ENCODE measurements at regions of chr14 and their contacts with region 1.

Region 1: DNA sequence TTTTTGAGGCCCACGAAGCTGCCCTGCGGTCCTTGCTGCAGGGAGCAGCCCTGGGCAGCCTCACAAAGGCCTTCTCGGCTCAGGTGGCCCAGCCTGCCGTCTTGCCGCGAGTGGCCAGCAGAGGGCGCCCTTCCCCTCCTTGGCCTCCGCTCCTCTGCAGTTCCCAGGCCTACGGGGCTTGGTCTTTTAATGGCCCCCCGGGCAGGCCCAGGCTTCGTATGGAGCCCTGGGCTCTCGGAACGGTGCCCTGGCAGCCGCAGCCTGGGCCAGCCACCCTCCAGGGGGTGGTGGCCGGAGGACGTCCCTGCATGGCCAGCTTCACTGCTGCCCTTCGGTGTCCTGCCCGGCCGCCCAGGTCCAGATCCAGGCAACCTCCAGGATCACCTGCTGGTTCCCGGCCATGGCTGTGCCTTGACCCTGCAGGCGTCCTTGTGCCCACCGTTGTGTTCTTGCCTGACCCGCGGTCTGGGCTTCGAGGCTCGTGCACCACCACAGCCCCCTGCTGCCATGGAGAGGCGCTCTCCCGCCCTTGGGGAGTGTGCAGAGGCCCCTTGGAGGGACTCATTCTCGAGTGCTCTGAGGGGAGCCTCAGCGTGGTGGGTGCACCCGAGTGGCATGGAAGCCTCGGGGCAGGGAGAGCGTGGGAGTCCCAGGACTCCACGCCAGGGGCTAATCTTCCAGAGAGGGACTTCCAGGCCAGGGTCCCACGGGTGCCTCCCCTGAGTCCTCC is 9.4 kb downstream of the ASPG start:
- DNase-seq: peak; percentile 55 to 81 (median 71)
- ATAC-seq: peak; percentile 73
- H3K4me3 ChIP-seq: no peak overlapping the region
- H3K4me3 Mint-ChIP-seq: no peak overlapping the region
- H3K27ac ChIP-seq: no peak overlapping the region
- H3K27ac Mint-ChIP-seq: no peak overlapping the region
- H3K4me1 ChIP-seq: peaks cover 8% of the 10 kb centered on the region
- H3K4me1 Mint-ChIP-seq: peaks cover 5% of the 10 kb centered on the region
- H3K27me3 ChIP-seq: no peaks in the 10 kb centered on the region
- H3K27me3 Mint-ChIP-seq: peaks cover 6% of the 10 kb centered on the region
- CTCF ChIP-seq: peak; percentile 86

Region 2: DNA sequence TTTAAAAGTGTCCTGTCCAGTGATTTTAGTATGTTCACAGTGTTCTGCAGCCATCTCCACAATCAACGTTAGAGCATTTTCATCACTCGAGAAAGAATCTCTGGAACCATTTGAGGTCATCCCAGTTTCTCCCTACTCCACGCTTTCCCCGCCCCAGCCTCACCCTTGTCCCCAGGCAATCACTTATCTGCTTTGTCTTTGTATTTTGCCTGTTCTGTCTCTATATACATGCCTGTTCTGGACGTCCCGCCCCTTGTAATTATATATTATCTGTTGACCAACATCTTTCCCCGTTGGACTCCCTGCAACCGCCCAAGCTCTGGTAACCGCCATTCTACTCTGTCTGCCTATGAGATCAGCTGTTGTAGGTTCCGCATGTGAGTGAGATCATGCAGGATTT is 30.9 kb before region 1 on chr14:
- CTCF ChIA-PET with region 1: no interaction called
- POLR2A ChIA-PET with region 1: no interaction called
- intact Hi-C with region 1: no loop called
- DNase-seq: no peak
- ATAC-seq: no peak
- H3K4me3 ChIP-seq: no peak overlapping the region
- H3K4me3 Mint-ChIP-seq: no peak overlapping the region
- H3K27ac ChIP-seq: no peak overlapping the region
- H3K27ac Mint-ChIP-seq: no peak overlapping the region
- H3K4me1 ChIP-seq: no peaks in the 10 kb centered on the region
- H3K4me1 Mint-ChIP-seq: no peaks in the 10 kb centered on the region
- H3K27me3 ChIP-seq: peaks cover 0 to 4% of the 10 kb centered on the region in 2 experiments
- H3K27me3 Mint-ChIP-seq: peaks cover 55% of the 10 kb centered on the region
- CTCF ChIP-seq: no peak

Region 3: GRCh38 chr14:104116756-104117255 is 21.9 kb after region 1 on chr14:
- CTCF ChIA-PET with region 1: no interaction called
- POLR2A ChIA-PET with region 1: no interaction called
- intact Hi-C with region 1: no loop called
- DNase-seq: no peak
- ATAC-seq: no peak
- H3K4me3 ChIP-seq: no peak overlapping the region
- H3K4me3 Mint-ChIP-seq: no peak overlapping the region
- H3K27ac ChIP-seq: no peak overlapping the region
- H3K27ac Mint-ChIP-seq: no peak overlapping the region
- H3K4me1 ChIP-seq: no peaks in the 10 kb centered on the region
- H3K4me1 Mint-ChIP-seq: no peaks in the 10 kb centered on the region
- H3K27me3 ChIP-seq: peaks cover 3 to 6% of the 10 kb centered on the region in 2 experiments
- H3K27me3 Mint-ChIP-seq: peaks cover 29% of the 10 kb centered on the region
- CTCF ChIP-seq: no peak

Region 4: DNA sequence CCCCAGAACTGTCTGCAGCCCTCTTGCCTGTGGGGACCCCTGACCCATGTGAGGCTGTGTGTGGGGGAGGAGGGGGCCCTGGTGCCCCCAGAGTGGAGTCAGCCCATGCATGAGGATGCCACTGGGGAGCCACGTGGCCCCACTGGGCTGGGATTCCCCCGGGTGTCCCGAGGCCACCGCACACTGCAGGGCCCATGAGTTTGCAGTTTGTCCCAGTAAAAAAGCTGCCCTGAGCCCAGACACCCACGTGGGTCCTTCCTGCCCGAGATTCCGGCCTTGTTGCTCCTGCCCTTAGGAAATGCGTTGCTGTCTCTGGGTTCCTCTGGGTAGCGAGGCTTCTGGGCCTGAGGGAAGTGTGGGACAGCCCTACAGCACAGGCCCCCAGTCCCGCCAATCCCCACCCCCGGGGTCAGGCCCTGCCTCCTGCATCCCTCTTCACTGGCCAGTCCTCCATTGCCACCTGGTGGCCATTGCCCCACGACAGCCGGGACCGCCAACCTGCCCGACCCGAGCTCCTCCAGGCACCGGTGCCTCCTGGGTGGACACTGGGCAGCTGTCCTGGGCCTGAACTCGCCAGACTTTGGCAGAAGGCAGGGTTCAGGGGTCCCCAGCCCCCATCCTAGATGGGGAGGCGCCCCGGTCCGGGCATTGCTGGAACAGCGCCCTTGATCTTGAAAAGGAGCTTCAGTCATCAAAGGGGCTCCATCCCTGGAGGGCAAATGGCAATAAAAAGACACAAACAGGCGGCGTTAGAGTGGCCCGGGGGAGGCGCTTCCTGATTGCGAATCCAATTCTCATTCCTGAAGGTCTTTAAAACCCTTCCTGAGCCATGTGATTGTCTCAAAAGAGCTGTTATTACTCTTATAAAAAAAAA is 469.1 kb after region 1 on chr14:
- CTCF ChIA-PET with region 1: interaction called, 7 read pairs
- POLR2A ChIA-PET with region 1: no interaction called
- intact Hi-C with region 1: loop called in 1 of 2 experiments (anchors 1 kb)
- DNase-seq: peak; percentile 48 to 82 (median 71)
- ATAC-seq: peak; percentile 71
- H3K4me3 ChIP-seq: no peak overlapping the region
- H3K4me3 Mint-ChIP-seq: no peak overlapping the region
- H3K27ac ChIP-seq: no peak overlapping the region
- H3K27ac Mint-ChIP-seq: no peak overlapping the region
- H3K4me1 ChIP-seq: no peaks in the 10 kb centered on the region
- H3K4me1 Mint-ChIP-seq: no peaks in the 10 kb centered on the region
- H3K27me3 ChIP-seq: peaks cover 0 to 3% of the 10 kb centered on the region in 2 experiments
- H3K27me3 Mint-ChIP-seq: peaks cover 15% of the 10 kb centered on the region
- CTCF ChIP-seq: peak; percentile 72

Region 5: DNA sequence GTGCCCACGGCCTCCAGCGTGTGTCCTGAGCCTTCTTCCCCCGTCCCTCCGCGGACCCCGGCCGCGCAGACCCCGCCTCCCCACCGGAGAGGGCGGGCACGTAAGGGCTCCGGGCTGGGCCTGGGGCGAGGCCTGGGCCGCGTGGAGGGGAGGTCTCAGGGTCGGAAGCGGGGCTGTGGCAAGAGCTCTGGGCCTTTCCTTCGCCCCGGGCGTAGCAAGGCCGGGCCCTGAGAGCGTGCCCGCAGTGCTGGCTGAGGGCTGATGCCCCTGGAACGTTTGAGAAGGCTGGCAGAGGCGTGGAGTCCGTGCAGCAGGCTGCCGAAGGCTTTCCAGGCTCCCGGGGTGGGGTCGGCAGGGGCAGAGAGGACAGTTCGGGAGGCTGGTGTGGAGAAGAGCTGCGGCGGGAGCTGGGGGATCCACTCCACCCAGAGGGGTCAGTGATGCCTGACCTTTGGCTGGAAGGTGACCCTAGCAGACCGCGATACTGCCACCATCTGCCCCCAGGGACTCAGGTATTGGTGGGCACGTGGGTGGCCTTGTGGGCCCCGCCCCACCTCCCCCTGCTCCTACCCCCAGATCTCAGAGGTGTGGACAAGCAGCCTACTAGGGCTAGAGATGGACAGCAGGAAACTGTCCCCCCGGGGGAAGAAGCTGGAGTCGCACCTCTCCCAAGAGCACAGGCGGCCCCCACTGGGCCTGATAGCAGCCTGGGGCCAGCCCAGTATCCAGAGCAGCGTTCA is 1304.0 kb after region 1 on chr14:
- CTCF ChIA-PET with region 1: no interaction called
- POLR2A ChIA-PET with region 1: no interaction called
- intact Hi-C with region 1: no loop called
- DNase-seq: peak in 1 of 9 experiments; percentile 21
- ATAC-seq: peak; percentile 51
- H3K4me3 ChIP-seq: peak overlapping the region; percentile 63 to 76
- H3K4me3 Mint-ChIP-seq: peak overlapping the region; percentile 79
- H3K27ac ChIP-seq: peak overlapping the region; percentile 71
- H3K27ac Mint-ChIP-seq: peak overlapping the region; percentile 64
- H3K4me1 ChIP-seq: peaks cover 22% of the 10 kb centered on the region
- H3K4me1 Mint-ChIP-seq: peaks cover 15% of the 10 kb centered on the region
- H3K27me3 ChIP-seq: no peaks in the 10 kb centered on the region
- H3K27me3 Mint-ChIP-seq: no peaks in the 10 kb centered on the region
- CTCF ChIP-seq: no peak

Measured in CD8-positive, alpha-beta T cell (primary cell).